GM12878 (cell line): ENCODE measurements at regions of chr6 and their contacts with region 1.

Region 1: GRCh38 chr6:74409447-74409846 is 713.4 kb downstream of the CD109 start:
- DNase-seq: no peak
- ATAC-seq: peak; percentile 92
- H3K4me3 ChIP-seq: no peak overlapping the region
- H3K27ac ChIP-seq: no peak overlapping the region
- H3K4me1 ChIP-seq: no peaks in the 10 kb centered on the region
- H3K27me3 ChIP-seq: no peaks in the 10 kb centered on the region
- CTCF ChIP-seq: peak; percentile 18 to 65 (median 24); a peak in 4 of 6 replicates
- EP300 ChIP-seq: no peak
- POLR2A ChIP-seq: no peak
- RAD21 ChIP-seq: peak; percentile 90

Region 2: GRCh38 chr6:73747289-73747688 is 662.2 kb before region 1 on chr6:
- CTCF ChIA-PET with region 1: interaction called, 3 read pairs
- POLR2A ChIA-PET with region 1: no interaction called
- RAD21 ChIA-PET with region 1: interaction called, 4 read pairs
- SMC1A ChIA-PET with region 1: no interaction called
- in situ Hi-C with region 1: no loop called
- intact Hi-C with region 1: loop called (anchors 10 kb)
- DNase-seq: peak; percentile 51
- ATAC-seq: peak; percentile 96
- H3K4me3 ChIP-seq: no peak overlapping the region; the same call in 1 of the 2 replicates
- H3K27ac ChIP-seq: no peak overlapping the region
- H3K4me1 ChIP-seq: peaks cover 2% of the 10 kb centered on the region; the same call in 1 of the 2 replicates
- H3K27me3 ChIP-seq: no peaks in the 10 kb centered on the region
- CTCF ChIP-seq: no peak
- EP300 ChIP-seq: no peak
- POLR2A ChIP-seq: no peak
- RAD21 ChIP-seq: no peak

Region 3: GRCh38 chr6:74467533-74468215 is 58.2 kb after region 1 on chr6:
- CTCF ChIA-PET with region 1: no interaction called
- POLR2A ChIA-PET with region 1: no interaction called
- RAD21 ChIA-PET with region 1: interaction called, 3 read pairs
- SMC1A ChIA-PET with region 1: no interaction called
- in situ Hi-C with region 1: no loop called
- intact Hi-C with region 1: loop called (anchors 5 kb)
- DNase-seq: no peak
- ATAC-seq: peak; percentile 68
- H3K4me3 ChIP-seq: no peak overlapping the region
- H3K27ac ChIP-seq: no peak overlapping the region
- H3K4me1 ChIP-seq: no peaks in the 10 kb centered on the region
- H3K27me3 ChIP-seq: no peaks in the 10 kb centered on the region
- CTCF ChIP-seq: no peak
- EP300 ChIP-seq: no peak
- POLR2A ChIP-seq: no peak
- RAD21 ChIP-seq: no peak

Region 4: DNA sequence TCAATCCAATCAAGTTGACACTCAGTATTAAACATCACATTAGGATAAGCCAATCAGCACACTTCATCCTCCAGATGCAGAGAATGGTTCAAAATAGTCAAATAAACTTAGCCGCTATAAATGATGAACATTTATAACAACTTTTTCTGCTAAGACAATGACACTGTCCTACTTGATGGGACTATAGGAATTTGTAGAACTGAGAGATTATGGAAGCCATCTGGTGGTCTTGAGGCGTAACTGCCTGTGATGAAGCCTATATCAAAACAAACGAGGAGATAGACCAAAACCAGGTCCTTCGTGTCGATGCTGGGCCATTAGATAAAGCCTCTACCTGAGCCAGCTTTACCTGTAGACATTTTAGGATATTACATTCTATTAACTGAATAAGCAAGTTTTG is 165.3 kb after region 1 on chr6:
- CTCF ChIA-PET with region 1: interaction called, 45 read pairs
- POLR2A ChIA-PET with region 1: no interaction called
- RAD21 ChIA-PET with region 1: interaction called, 19 read pairs
- SMC1A ChIA-PET with region 1: interaction called, 23 read pairs
- in situ Hi-C with region 1: no loop called
- intact Hi-C with region 1: loop called (anchors 2 kb)
- DNase-seq: no peak
- ATAC-seq: peak; percentile 50
- H3K4me3 ChIP-seq: no peak overlapping the region
- H3K27ac ChIP-seq: no peak overlapping the region
- H3K4me1 ChIP-seq: peaks cover 12% of the 10 kb centered on the region
- H3K27me3 ChIP-seq: no peaks in the 10 kb centered on the region
- CTCF ChIP-seq: peak; percentile 41 to 52 (median 47); a peak in 5 of 6 replicates
- EP300 ChIP-seq: no peak
- POLR2A ChIP-seq: no peak
- RAD21 ChIP-seq: peak; percentile 57; the same call in 1 of the 2 replicates

Region 5: DNA sequence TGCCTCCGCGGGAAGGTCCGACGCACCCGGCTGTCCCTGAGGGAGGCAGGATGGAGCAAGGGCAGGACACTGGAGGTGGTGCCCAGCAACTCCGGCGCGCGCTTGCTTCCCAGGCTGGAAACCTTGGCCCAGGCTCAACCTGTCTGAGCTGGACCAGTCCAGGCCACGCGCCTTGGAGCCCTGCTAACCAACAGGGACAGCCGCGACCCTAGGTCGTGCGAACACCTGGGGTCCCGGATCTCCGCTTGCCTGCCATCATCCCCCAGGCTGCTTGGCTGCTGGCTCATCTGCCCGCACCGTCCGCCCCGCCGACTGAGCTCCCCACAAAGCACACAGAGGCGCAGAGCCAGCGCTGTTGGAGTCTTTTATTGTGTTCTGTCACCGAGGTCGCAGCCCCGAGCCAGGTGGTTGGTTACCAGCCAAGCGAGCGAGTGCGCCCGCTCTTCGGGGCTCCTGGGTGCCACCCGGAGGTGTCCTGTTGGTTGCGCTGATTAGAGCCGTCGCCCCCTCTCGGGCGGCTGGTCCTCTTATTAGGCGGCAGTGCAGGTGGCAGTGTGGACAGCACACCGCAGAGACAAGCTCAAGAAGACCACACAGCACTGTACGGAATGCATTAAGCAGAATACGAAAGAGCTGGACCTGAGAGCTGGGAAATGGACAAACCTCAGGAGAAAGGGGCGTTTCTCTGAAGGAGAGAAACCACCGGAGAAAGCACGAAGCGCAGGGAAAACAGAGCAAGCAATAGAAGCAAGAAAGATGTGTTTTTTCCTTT is 792.6 kb after region 1 on chr6:
- CTCF ChIA-PET with region 1: interaction called, 69 read pairs
- POLR2A ChIA-PET with region 1: no interaction called
- RAD21 ChIA-PET with region 1: interaction called, 64 read pairs
- SMC1A ChIA-PET with region 1: interaction called, 64 read pairs
- in situ Hi-C with region 1: loop called (anchors 10 kb)
- intact Hi-C with region 1: loop called (anchors 1 kb)
- DNase-seq: no peak
- ATAC-seq: peak; percentile 59
- H3K4me3 ChIP-seq: no peak overlapping the region
- H3K27ac ChIP-seq: no peak overlapping the region
- H3K4me1 ChIP-seq: no peaks in the 10 kb centered on the region
- H3K27me3 ChIP-seq: peaks cover 26 to 27% of the 10 kb centered on the region in 2 experiments
- CTCF ChIP-seq: no peak
- EP300 ChIP-seq: no peak
- POLR2A ChIP-seq: no peak
- RAD21 ChIP-seq: no peak